Cardiac septum (tissue), 1 donor: ENCODE measurements at regions of chr6 and their contacts with region 1.

Region 1: DNA sequence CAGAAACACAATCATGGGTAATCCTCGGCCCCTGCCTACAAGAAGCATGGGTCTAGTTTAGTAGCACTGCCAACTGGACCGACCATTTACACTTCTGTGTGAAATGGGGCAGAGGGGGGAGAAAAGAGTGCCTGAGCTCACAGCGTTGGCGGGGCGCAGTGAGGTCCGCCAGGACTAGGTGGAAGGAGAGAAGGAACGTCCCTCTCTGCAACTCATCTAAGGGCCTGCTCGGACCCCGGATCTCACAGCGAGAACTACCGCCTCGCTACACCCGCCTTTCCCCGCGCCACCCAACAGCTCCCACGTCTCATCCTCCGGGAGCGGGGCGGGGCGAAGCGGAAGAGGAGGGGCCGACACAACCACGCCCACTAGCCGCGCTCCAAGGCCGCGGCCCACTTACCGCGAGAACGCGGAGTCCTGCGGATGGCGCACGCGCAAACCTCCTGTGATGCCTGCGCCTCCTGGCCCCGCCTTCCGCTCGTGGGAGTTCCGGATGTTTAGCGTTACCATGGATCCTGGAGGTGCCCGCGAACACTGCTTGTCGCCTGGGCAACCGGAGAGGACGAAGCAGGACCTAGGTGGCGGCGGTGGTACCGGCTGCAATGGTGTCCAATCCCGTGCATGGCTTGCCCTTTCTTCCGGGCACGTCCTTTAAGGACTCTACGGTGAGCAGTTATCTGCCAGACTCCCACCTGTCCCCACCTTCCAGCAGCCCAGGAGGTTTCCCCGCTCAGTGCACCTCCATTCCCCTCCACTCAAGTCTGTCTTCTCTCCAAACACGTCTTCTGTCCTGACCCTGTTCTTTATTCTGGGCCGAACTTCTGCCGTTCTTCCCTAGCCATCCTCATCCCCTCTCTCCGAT is at the start of gene EFHC1:
- DNase-seq: peak; percentile 99
- total RNA-seq, gene EFHC1: 6.2 TPM

Region 2: DNA sequence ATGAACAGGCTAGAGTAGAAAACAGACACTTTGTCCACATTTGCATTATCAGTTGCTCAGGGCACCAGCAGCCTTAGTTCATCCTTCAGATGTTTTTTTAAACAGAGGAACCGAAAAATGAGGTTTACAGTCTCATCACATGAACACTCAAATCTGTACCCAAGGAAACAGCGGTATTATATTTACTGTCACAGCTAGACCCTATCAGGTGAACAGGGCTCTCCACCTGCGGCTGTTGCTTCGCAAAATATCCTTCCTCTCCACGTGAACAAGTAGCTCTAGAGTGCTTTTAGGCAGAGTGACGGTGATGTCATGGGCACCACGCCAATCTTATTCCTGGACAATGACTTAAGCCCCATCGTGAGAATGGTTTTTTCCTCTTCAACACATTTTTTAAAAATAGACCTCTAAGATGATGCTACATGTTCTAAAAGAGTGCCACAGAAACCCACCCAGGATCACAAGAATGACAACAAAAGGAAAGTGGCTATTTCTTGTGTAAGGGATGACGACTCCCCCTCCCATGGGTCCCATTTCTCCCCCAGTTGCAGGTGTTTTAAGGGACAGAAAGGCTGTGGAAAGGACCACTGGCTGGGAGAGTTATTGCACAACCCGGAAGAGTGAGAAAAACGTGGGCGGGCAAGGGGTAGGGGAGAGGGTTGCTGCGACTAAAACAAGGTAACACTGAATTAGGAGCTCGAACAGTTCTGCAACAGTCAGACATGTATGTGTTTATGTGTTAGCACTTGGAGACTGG is 77.8 kb after region 1 on chr6:
- intact Hi-C with region 1: loop called (anchors 2 kb)
- DNase-seq: no peak

Region 3: DNA sequence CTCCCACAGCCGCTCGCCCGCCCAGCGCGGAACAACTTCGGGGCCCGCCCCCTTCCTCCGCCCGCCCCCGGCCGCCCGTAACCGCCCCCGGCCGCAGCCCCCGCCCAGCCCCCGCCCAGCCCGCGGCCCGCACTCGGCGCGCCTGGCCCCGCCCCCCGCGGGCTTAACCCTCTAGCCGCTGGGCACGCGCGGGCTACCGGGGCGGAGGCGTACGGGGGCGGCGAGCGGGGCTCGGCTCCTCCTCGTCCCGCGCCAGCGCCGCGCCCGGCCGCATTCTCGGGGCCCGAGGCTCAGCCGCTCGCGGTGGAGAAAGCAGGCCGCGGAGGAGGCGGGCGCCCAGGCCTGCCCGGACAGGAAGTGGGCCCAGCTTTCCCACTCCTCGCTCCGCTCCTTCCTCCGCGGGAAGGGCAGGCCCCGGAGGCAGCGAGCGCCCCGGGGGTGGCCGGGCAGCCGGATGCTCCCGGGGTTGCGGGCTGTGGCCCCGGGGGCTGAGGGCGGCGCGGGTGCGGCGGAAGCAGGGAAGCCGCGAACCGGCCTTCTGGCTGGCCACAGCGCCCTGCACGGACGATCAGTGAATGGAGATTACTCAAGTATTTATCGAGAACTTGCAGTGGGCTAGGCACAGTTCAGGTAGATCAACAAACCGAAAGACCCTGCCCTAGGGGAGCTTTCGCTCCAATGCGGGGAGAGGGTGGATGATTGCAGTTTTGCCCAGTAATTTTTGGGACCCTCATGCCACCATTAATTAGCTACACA is 157.2 kb after region 1 on chr6 and contains the start of gene TRAM2:
- intact Hi-C with region 1: loop called (anchors 1 kb)
- DNase-seq: peak; percentile 93
- total RNA-seq, gene TRAM2: 10.3 TPM

Region 4: DNA sequence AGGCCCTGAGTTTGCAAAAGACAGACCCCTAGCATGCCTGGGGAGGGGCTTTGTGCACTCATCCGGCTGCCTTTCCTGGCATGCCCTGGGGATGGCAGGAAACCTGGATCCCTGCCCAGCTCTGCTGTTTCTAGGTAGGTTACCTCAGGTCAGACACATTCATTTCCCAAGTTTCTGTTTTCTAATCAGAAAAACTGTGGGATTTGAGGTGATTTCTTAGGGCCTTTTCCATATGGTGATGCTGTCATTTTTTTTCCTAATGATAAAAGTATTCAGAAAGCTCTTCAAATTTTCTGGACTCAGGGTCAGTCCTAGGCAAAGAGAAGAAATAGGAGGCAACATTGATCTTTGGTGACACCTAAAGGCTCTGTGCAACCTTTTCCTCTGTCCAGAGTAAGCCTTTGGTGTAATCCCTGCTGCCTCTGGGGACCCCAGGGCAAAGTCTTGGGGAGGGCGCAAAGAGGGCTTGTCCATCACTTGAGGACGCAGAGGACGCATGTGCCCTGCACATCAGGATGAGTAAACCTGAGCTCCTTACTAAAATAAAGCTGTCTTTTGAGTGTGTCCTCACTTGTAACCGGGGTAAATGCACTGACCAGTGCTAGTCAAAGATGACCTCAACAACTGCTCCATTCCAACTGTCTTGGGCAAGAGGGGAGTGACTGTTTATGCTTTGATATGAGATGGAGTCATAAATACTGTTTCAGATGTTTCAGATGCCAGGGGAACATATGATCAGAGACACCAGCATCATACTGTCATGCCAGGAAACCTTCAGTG is 170.3 kb after region 1 on chr6:
- intact Hi-C with region 1: loop called (anchors 2 kb)
- DNase-seq: no peak

Region 5: DNA sequence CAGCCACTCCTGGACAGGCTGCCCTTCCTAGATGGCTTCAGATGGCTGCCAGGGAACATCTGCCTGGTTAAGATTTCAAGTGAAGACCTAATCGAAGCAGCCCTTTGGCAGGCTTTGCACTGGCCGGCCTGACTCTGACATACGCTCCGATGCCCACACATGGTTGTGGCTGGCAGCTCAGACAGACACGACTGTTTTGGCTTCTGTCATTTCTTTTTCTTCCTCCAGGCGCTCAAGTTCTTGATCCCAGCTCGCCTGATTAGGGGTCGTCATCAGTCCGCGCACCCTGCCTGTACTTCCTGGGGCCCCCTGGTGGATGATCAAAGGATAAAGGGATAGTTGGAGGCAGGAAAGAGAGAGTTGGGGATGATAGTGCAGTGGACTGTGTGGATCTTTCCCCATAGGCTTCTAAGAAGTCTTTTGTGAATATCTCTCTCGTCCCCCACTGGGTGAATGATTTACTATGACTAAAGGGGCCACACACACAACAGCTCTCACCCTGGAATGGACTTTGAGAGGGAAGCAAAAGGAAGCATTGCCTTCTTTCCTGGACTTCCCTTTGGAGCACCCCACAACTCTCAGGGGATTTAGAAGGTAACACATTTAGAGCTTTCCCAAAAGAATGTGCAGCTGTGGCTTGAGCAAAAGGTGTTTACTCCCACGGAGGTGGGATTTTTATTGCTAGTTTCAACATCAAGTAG is 178.2 kb after region 1 on chr6:
- intact Hi-C with region 1: loop called (anchors 2 kb)
- DNase-seq: no peak

Region 6: GRCh38 chr6:52664186-52664990 is 244.3 kb after region 1 on chr6:
- intact Hi-C with region 1: loop called (anchors 1 kb)
- DNase-seq: peak; percentile 94

Region 7: DNA sequence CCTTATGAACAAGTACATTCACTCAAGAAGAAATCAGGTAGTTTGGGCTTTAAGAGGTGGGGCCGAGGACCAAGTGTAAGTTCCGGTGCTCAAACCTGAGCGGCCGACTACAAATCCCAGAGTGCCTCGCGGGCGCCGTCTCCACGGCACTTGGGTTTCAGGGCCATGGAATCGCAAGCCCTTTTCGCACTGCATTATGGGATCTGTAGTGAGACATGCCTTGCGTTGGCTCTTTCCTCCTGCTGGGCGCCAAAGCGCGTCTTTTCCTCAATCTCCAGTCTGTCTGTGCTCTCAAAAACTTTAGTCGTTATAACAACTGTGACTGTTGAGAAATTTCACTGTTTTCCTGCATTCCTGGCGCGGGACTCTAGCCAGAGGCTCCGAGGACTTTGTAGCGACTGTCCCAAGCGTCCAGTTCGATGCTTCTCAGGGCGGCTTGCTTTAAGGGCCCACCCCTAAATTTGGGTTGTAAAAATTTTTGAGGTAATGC is 644.7 kb after region 1 on chr6:
- intact Hi-C with region 1: loop called (anchors 5 kb)
- DNase-seq: peak; percentile 99